ENCODE measurements at regions of chr6 and their contacts with region 1.

Region 1: GRCh38 chr6:37791156-37791919 is 28.2 kb upstream of the ZFAND3 start:
- DNase-seq: peak in 1 of 2 donors; percentile 96
- H3K4me3 ChIP-seq: no peak overlapping the region
- H3K27ac ChIP-seq: no peak overlapping the region
- H3K4me1 ChIP-seq: peaks cover 12% of the 10 kb centered on the region
- H3K27me3 ChIP-seq: no peaks in the 10 kb centered on the region
- CTCF ChIP-seq: peak; percentile 67 to 96 (median 88)
- POLR2A ChIP-seq: no peak

Region 2: GRCh38 chr6:36594816-36595643 is 1196.3 kb before region 1 on chr6:
- intact Hi-C with region 1: no loop called
- DNase-seq: no peak
- H3K4me3 ChIP-seq: peak overlapping the region; percentile 51 to 72
- H3K27ac ChIP-seq: peak overlapping the region; percentile 100
- H3K4me1 ChIP-seq: peaks cover 48% of the 10 kb centered on the region
- H3K27me3 ChIP-seq: no peaks in the 10 kb centered on the region
- CTCF ChIP-seq: no peak
- POLR2A ChIP-seq: no peak

Region 3: GRCh38 chr6:37758234-37759002 is 32.9 kb before region 1 on chr6:
- intact Hi-C with region 1: no loop called
- DNase-seq: no peak
- H3K4me3 ChIP-seq: no peak overlapping the region
- H3K27ac ChIP-seq: no peak overlapping the region
- H3K4me1 ChIP-seq: no peaks in the 10 kb centered on the region
- H3K27me3 ChIP-seq: no peaks in the 10 kb centered on the region
- CTCF ChIP-seq: no peak
- POLR2A ChIP-seq: no peak

Region 4: GRCh38 chr6:38012573-38012972 is 221.2 kb after region 1 on chr6:
- intact Hi-C with region 1: loop called (anchors 10 kb)
- DNase-seq: no peak
- H3K4me3 ChIP-seq: no peak overlapping the region
- H3K27ac ChIP-seq: no peak overlapping the region
- H3K4me1 ChIP-seq: no peaks in the 10 kb centered on the region
- H3K27me3 ChIP-seq: no peaks in the 10 kb centered on the region
- CTCF ChIP-seq: peak in 1 of 3 experiments; percentile 29
- POLR2A ChIP-seq: no peak